Lower leg skin (tissue), 4 donors: ENCODE measurements at regions of chr4 and their contacts with region 1.

Region 1: GRCh38 chr4:133394971-133395627 is 246.0 kb downstream of the PCDH10 start:
- DNase-seq: peak in 1 of 2 donors; percentile 81
- H3K4me3 ChIP-seq: no peak overlapping the region
- CTCF ChIP-seq: no peak
- POLR2A ChIP-seq: no peak

Region 2: DNA sequence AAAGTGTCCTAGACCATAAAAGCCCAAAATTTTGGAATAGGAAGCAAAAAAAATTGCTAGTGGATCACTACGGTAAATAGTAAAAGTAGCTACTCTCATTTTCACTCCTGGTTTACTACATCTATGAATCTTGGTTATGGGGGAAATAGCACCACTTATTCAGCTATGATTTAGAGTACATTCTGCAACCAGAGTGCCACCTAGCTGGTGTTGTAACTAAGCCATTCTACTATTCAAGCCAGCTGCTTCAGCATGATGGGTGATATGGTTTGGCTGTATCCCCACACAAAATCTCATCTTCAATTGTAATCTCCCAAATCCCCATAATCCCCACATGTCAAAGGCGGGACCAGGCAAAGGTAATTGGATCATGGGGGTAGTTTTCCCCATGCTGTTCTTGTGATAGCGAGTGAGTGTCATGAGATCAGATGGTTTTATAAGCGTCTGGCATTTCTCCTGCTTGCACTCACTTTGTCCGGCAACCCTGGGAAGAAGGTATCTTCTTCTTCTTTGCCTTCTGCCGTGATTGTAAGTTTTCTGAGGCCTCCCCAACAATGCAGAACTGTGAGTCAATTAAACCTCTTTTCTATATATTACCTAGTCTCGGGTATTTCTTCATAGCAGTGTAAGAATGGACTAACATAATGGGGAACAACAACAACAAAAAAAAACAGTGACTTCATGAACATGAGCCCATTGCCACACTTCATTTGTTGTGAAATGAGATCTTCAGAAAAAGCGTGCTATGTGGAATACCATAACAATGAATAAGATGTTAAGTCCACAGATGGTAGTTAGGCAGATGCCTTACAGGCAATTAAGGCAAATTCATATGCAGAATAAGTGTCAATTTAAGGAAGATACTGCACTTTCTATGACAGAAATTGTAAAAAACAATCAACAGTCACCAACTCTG is 526.4 kb after region 1 on chr4:
- intact Hi-C with region 1: loop called (anchors 5 kb)
- DNase-seq: no peak
- H3K4me3 ChIP-seq: no peak overlapping the region
- CTCF ChIP-seq: no peak
- POLR2A ChIP-seq: no peak